ENCODE measurements at regions of chr3 and their contacts with region 1.

Region 1: GRCh38 chr3:124860599-124860998 is 26.6 kb downstream of the ITGB5 start:
- DNase-seq: peak; percentile 89

Region 2: DNA sequence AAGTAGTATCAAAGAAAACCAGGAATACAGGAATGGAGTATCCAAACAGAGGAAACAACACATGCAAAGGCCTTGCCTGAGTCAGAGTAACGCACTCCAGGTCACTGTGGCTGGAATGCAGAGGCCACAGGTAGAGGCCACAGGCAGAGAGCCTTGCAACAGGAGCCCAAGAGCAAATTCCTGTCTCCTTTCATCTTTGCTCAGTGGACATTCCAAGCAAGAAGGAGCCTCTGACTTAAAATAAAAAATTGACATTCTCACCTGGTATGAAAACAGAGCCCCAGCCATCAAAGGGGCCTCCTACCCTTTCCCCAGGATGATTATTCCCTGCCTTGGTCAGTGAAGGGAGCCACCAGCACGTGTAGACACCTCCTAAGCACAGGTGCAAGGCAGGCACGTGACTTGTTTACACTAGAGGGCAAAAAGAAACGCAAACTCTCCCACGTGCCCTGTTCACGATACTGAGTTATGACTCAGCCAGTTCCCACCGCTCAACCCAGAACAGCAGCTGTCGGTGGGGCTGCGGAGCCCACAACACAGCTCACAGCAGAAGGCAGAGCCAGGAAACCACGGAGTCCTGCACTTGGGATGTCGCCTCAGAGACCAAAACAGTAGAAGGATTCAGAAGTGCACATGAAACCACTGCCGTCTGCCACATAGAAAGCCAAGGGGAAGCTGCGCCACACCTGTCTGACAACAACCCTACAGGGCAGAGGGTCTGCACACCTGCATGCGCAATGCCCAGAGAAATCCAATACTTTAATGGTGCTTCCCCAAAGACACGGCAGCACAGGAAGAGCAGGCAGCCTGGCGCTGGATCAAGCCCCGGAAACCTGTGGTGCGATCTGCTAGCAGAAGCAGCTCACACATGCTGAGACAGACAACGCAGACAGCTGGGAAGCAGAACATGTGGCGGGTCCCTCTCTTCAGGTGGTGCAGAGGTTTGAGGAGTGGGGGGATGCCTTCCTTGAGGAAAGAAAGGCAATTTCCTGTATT is 25.6 kb before region 1 on chr3:
- intact Hi-C with region 1: loop called (anchors 1 kb)
- DNase-seq: no peak

Region 3: GRCh38 chr3:124951511-124952281 is 91.1 kb after region 1 on chr3:
- intact Hi-C with region 1: no loop called
- DNase-seq: no peak

Measured in cardiac septum (tissue), 1 donor.